Caco-2 (cell line): ENCODE measurements at regions of chr4 and their contacts with region 1.

Region 1: GRCh38 chr4:142282870-142283431 is 563.1 kb downstream of the INPP4B start:
- DNase-seq: peak in 1 of 2 experiments; percentile 46
- H3K4me3 ChIP-seq: no peak overlapping the region
- H3K4me3 Mint-ChIP-seq: no peak overlapping the region
- H3K27ac Mint-ChIP-seq: no peak overlapping the region
- H3K4me1 ChIP-seq: no peaks in the 10 kb centered on the region
- H3K4me1 Mint-ChIP-seq: no peaks in the 10 kb centered on the region
- H3K27me3 ChIP-seq: no peaks in the 10 kb centered on the region
- H3K27me3 Mint-ChIP-seq: peaks cover 3% of the 10 kb centered on the region
- CTCF ChIP-seq: peak; percentile 33 to 76

Region 2: GRCh38 chr4:142719854-142720541 is 437.0 kb after region 1 on chr4:
- CTCF ChIA-PET with region 1: no interaction called
- POLR2A ChIA-PET with region 1: no interaction called
- intact Hi-C with region 1: loop called (anchors 1 kb)
- DNase-seq: peak in 1 of 2 experiments; percentile 21
- H3K4me3 ChIP-seq: no peak overlapping the region
- H3K4me3 Mint-ChIP-seq: no peak overlapping the region
- H3K27ac Mint-ChIP-seq: no peak overlapping the region
- H3K4me1 ChIP-seq: no peaks in the 10 kb centered on the region
- H3K4me1 Mint-ChIP-seq: no peaks in the 10 kb centered on the region
- H3K27me3 ChIP-seq: no peaks in the 10 kb centered on the region
- H3K27me3 Mint-ChIP-seq: no peaks in the 10 kb centered on the region
- CTCF ChIP-seq: peak in 1 of 2 experiments; percentile 37

Region 3: DNA sequence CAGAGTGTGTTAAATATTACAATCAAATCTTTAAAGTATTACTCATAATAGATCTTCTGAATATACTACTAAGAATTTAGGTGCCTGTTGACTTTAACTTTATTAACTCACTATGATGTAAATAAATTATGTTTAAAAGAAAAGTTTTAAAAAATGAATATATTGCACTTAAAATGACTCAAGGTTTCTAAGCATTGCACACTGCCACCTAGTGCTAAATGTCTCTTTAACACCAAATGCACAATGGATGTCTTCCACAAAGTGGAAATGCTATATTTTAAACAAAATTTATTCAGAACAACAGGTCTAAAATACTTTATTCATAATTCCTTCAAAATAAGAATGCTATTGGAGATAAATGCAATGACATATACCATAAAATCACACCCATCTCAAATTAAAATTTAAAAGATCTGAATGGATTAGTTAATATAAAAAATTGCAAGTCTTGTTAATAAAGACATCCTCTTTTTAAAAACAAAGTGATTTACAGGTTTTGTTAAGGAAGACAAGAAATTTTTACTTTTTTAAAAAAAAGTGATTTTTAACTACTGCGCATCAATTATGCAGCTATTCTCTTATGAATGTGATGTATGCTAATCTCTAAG is 557.7 kb after region 1 on chr4:
- CTCF ChIA-PET with region 1: no interaction called
- POLR2A ChIA-PET with region 1: no interaction called
- intact Hi-C with region 1: loop called (anchors 2 kb)
- DNase-seq: no peak
- H3K4me3 ChIP-seq: no peak overlapping the region
- H3K4me3 Mint-ChIP-seq: no peak overlapping the region
- H3K27ac Mint-ChIP-seq: no peak overlapping the region
- H3K4me1 ChIP-seq: no peaks in the 10 kb centered on the region
- H3K4me1 Mint-ChIP-seq: no peaks in the 10 kb centered on the region
- H3K27me3 ChIP-seq: no peaks in the 10 kb centered on the region
- H3K27me3 Mint-ChIP-seq: peaks cover 12% of the 10 kb centered on the region
- CTCF ChIP-seq: peak; percentile 56 to 58